ENCODE measurements at regions of chr2 and their contacts with region 1.

Region 1: DNA sequence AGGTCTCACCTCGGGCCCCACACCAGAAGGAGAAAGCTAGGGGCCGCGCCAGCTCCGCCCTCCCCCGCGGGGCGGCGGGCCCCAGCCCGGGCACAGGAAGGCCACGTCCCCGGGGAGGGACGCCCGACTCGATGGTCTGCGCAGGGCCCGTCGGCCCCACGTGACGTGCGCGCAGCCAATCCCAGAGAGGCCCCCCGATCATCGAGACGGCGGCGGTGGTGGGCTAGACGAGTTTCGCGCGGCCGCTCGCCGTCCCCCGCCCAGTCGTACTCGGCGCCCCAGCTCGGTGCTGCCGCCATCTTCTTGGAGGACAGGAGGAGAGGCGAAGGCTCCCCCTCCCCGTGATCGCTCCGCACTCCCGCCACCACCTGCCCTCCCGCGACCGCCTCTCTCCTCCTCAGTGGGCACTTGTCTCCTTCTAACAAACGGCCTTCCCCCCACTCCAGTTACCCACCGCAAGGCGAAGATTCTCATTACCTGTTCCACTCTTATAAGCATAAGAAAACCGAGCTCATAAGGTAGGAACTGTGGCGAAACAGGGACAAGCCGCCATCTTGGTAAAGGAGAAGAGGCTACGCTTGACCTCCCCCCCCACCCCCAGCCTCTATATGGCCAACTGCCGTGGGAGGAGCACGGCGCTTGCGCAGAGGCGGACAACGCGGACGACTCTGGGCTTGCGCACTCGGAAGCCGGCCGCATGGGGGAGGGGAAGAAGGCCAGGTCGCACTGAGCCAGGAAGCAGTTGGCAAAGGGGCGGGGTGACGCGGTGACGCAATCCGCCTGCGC is at the start of gene HDLBP:
- DNase-seq: peak; percentile 99
- H3K4me3 ChIP-seq: peak within 1 kb of the TSS; percentile 67 to 93 (median 92)
- H3K27ac ChIP-seq: peak within 1 kb of the TSS; percentile 90
- H3K4me1 ChIP-seq: peaks cover 36% of the 10 kb centered on the region
- H3K27me3 ChIP-seq: no peaks in the 10 kb centered on the region
- CTCF ChIP-seq: peak; percentile 14 to 33
- POLR2A ChIP-seq: peak; percentile 89
- total RNA-seq, gene HDLBP: 554 and 569 TPM in 2 replicates

Region 2: DNA sequence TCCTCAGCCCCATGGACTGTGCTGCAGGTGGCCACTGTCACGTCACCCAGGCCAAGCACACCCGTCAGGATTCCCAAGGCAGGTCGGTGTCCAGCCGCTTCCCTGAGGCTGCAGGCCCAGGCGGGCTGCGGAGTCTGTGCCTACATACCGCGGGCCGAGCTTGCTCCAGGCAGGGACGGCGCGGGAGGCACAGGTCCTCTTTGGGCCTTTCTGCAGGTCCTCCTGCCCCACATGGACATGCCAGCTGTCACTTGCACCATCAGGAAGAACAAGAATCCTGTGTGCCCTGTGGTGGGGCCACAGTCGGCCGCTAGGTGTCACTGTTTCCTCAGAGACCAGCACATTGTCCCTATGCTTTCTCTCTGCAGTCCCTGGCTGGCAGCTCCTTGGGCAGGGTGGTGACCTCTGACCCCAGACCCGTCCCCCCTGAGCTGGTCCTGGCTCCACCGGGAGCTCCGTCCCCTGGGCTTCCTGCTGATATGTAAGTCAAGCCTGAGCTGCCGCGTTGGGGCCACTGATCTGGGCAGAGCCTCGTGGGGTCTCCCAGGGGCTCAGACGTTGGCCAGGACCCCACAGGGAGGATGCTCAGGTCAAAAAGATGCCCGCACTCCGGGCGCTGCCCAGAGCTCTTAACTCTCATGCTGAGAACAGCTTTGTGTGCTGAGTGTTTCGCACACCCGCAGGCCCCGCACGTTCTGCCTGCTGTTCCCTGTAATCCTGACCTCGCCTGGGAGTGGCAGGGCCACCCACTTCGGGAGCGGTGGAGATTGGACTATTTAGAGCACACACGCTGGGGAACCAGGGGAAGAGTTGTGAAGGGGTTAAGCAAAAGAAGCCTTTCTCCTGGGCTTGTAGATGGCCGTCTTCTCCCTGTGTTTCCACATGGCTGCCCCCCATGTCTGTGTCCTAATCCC is 464.0 kb before region 1 on chr2:
- CTCF ChIA-PET with region 1: no interaction called
- POLR2A ChIA-PET with region 1: no interaction called
- dilution Hi-C with region 1: no loop called
- intact Hi-C with region 1: loop called (anchors 10 kb)
- DNase-seq: peak; percentile 78
- H3K4me3 ChIP-seq: no peak overlapping the region
- H3K27ac ChIP-seq: no peak overlapping the region
- H3K4me1 ChIP-seq: no peaks in the 10 kb centered on the region
- H3K27me3 ChIP-seq: no peaks in the 10 kb centered on the region
- CTCF ChIP-seq: peak; percentile 92 to 95
- POLR2A ChIP-seq: no peak

Region 3: DNA sequence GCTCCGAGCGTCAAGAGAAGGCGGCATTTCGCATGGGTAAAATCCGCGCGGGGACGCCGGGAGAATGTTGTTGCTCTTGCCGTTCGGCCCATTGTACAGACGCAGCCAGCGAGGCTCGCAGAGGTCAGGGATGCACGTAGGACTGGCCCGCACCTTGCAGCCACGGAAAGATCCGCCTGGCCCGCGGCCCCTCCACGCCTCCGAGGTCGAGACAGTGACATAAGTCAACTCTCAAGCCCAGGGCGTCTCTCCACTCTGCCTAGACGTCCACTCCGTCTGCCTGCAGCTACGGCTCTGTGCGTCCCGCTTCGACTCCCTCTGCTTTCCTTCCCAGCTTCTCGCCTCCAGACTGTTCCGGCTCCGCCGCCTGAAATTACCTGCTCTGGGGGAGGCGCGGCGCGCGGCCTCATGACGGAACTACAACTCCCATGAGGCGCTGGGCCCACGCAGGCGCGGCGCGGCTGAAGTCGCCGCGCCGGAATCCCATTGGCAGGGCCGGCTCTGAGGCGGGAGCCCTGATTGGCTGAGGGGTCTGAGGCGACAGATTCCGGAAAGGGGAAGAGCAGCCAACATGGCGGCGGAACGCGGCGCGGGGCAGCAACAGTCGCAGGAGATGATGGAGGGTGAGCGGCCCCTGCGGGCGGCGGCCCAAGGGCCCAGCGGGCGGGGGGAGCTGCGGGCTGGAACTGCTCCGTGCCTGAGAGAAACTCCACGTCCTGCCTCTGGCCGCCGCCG is 165.2 kb before region 1 on chr2 and contains the start of gene PPP1R7:
- CTCF ChIA-PET with region 1: no interaction called
- POLR2A ChIA-PET with region 1: interaction called, 4 read pairs
- dilution Hi-C with region 1: no loop called
- intact Hi-C with region 1: loop called (anchors 1 kb)
- DNase-seq: peak; percentile 95
- H3K4me3 ChIP-seq: peak within 1 kb of the TSS; percentile 76 to 85 (median 78)
- H3K27ac ChIP-seq: no peak within 1 kb of the TSS
- H3K4me1 ChIP-seq: peaks cover 15% of the 10 kb centered on the region
- H3K27me3 ChIP-seq: no peaks in the 10 kb centered on the region
- CTCF ChIP-seq: peak in 1 of 2 donors; percentile 16
- POLR2A ChIP-seq: peak; percentile 74
- total RNA-seq, gene PPP1R7: 60.8 and 68.2 TPM in 2 replicates

Region 4: GRCh38 chr2:241355983-241356870 is 40.9 kb after region 1 on chr2 and contains the start of gene FARP2:
- CTCF ChIA-PET with region 1: no interaction called
- POLR2A ChIA-PET with region 1: interaction called, 3 read pairs
- dilution Hi-C with region 1: no loop called
- intact Hi-C with region 1: loop called (anchors 1 kb)
- DNase-seq: peak; percentile 99
- H3K4me3 ChIP-seq: peak within 1 kb of the TSS; percentile 48 to 91 (median 62)
- H3K27ac ChIP-seq: peak within 1 kb of the TSS; percentile 33
- H3K4me1 ChIP-seq: peaks cover 21% of the 10 kb centered on the region
- H3K27me3 ChIP-seq: no peaks in the 10 kb centered on the region
- CTCF ChIP-seq: no peak
- POLR2A ChIP-seq: peak; percentile 89
- total RNA-seq, gene FARP2: 40.6 and 45.3 TPM in 2 replicates